Tibial artery (tissue), 4 donors: ENCODE measurements at regions of chr11 and their contacts with region 1.

Region 1: GRCh38 chr11:10564696-10565318 is 3.7 kb downstream of the LYVE1 start:
- DNase-seq: no peak
- H3K4me3 ChIP-seq: no peak overlapping the region
- H3K27ac ChIP-seq: peak overlapping the region in 1 of 2 donors; percentile 1
- H3K4me1 ChIP-seq: peaks cover 0 to 18% (median 2%) of the 10 kb centered on the region in 4 donors
- H3K27me3 ChIP-seq: no peaks in the 10 kb centered on the region
- CTCF ChIP-seq: peak; percentile 59 to 65

Region 2: GRCh38 chr11:10394229-10395101 is 170.3 kb before region 1 on chr11:
- intact Hi-C with region 1: no loop called
- DNase-seq: no peak
- H3K4me3 ChIP-seq: no peak overlapping the region
- H3K27ac ChIP-seq: no peak overlapping the region
- H3K4me1 ChIP-seq: peaks cover 0 to 12% (median 0%) of the 10 kb centered on the region in 4 donors
- H3K27me3 ChIP-seq: no peaks in the 10 kb centered on the region
- CTCF ChIP-seq: no peak

Region 3: GRCh38 chr11:10405855-10406592 is 158.8 kb before region 1 on chr11:
- intact Hi-C with region 1: loop called (anchors 10 kb)
- DNase-seq: peak; percentile 79 to 80
- H3K4me3 ChIP-seq: no peak overlapping the region
- H3K27ac ChIP-seq: no peak overlapping the region
- H3K4me1 ChIP-seq: peaks cover 0 to 11% (median 4%) of the 10 kb centered on the region in 4 donors
- H3K27me3 ChIP-seq: no peaks in the 10 kb centered on the region
- CTCF ChIP-seq: peak; percentile 72 to 75

Region 4: DNA sequence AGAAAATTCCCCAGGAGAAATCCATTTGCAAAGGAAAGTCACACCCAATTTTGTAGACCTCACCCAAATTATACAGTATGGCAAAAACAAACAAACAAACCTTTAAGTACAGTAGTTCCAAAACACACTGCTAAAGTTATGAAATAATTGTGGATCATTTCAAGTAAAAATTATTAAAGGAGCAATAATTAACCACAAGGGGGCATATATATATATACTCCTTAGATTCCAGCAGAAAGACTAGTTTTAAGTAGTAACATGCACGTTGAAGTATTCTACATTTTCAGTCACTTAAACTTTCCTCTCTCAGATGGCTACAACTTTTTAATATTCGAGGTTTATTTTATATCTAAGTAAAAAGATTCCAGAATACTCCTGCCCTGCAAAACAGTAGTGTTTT is 50.6 kb before region 1 on chr11:
- intact Hi-C with region 1: no loop called
- DNase-seq: no peak
- H3K4me3 ChIP-seq: no peak overlapping the region
- H3K27ac ChIP-seq: peak overlapping the region; percentile 36 to 42
- H3K4me1 ChIP-seq: peaks cover 0 to 36% (median 8%) of the 10 kb centered on the region in 4 donors
- H3K27me3 ChIP-seq: no peaks in the 10 kb centered on the region
- CTCF ChIP-seq: peak; percentile 43 to 44

Region 5: DNA sequence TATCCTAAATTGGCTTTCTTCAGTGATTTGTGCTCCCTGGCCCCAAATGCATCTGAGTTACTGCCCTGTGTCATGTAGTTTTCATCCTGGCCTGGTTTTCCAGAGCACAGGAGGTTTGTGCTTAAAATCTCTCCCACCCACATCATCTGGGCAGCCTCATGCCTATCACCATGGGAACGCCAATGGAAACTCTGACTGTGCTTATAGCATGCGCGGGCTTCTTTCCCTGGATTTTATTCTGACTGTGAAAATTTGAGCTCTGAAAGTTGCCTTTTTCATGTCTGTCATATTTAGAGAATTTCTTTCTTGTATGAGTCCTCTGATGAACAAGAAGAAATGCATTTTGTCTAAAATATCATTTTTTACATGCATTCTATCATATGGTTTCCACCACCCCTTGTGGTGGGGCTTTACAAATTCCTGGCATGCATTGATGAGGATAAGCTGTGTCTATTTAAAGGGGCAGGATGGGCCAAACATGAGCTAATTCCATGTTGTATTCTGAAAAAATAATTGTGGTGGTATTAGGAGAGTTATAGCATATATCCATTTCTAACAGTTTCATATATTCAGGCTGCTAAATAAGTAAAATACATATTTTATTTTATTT is 73.6 kb after region 1 on chr11:
- intact Hi-C with region 1: loop called (anchors 2 kb)
- DNase-seq: peak; percentile 30 to 81
- H3K4me3 ChIP-seq: no peak overlapping the region
- H3K27ac ChIP-seq: peak overlapping the region; percentile 75 to 89
- H3K4me1 ChIP-seq: peaks cover 0 to 67% (median 43%) of the 10 kb centered on the region in 4 donors
- H3K27me3 ChIP-seq: no peaks in the 10 kb centered on the region
- CTCF ChIP-seq: no peak

Region 6: DNA sequence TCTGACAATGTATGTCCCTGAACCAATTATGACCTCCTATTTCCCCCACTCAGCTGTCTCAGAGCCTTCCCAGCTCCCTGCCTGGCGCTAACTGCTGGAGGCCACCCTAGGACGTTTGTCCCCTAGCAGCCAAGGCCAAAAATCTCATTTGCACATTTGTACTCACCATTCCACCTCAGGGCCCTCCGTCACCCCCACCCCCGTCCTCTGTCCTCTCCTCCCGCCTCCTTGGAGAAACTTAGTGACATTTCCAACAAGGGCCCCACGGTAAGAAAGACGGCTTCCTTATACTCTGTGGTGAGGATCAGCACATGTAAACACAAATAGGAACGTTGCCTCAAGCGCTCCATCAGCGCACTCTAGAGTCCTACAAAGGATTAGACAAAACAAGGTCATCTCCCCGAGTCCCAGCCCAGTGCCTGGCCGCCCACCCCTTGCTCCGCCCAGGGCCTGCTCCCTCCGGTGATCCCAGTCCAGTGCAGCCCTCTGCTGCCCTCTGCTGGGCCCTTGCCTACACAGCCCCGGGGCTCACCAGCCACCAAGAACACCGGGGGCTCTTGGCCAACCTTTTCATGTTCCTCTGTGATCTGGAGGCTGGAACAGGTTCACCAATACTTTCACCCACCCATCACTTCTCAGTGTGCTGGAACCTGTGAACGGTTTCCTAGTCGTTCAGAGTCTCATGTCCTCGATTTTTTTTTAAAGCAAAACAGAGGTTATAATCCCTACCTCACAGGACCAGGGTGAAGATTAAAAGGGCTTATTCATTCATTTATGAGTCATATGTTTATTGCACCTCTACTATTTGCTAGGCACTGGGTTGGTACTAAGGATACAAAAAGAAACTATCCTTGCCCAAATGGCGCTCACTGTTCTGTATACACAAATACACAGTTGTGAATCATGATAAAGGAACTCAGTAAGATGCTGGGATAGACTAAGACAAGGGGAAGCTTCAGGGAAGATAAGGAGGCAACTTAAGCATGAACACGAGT is 171.0 kb after region 1 on chr11:
- intact Hi-C with region 1: loop called (anchors 10 kb)
- DNase-seq: peak; percentile 95 to 96
- H3K4me3 ChIP-seq: peak overlapping the region; percentile 15 to 28
- H3K27ac ChIP-seq: peak overlapping the region; percentile 68 to 70
- H3K4me1 ChIP-seq: peaks cover 0 to 35% (median 13%) of the 10 kb centered on the region in 4 donors
- H3K27me3 ChIP-seq: no peaks in the 10 kb centered on the region
- CTCF ChIP-seq: peak; percentile 98 to 99